OCI-LY7 (cell line): ENCODE measurements at regions of chr11 and their contacts with region 1.

Region 1: GRCh38 chr11:47152953-47153950 is 23.4 kb downstream of the ARFGAP2 start:
- DNase-seq: peak; percentile 94
- H3K4me3 ChIP-seq: peak overlapping the region; percentile 53
- H3K27ac ChIP-seq: peak overlapping the region; percentile 95
- H3K4me1 ChIP-seq: peaks cover 93% of the 10 kb centered on the region
- CTCF ChIP-seq: peak; percentile 100

Region 2: DNA sequence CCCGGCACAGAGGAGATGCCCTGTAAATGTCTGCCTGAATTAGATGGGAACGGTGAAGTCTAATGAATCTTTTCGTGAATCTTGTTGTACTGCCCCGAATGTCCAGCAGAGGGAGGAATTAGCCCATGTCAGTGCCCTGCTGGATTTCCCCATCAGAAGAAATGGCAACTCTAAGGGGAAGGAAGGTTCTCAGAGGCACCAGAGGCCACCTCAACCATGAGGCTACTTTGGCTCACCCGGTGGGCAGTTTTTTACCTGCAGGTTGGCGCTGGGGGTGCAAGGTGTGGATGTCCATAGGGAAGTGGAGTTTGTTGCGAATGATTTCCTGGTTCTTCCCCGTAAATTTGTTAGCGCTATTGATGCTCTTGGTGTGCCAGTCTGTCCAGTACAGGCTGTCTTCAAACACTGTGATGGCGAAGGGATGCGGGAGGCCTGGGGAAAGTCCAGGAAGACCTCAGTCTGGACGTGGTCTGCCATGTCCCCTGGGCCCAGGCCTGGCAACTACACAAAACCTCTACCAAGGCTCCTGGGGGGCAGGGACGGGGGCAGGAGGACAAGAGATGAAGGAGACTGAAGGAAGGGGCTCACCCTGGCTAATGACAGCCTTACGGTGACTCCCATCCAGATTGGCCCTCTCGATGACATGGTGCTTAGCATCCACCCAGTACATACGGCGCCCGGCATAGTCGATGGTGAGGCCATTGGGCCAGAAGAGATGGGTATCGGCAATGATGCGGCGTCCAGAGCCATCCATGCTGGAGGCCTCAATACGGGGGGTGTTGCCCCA is 263.4 kb before region 1 on chr11:
- CTCF ChIA-PET with region 1: interaction called, 6 read pairs
- POLR2A ChIA-PET with region 1: interaction called, 4 read pairs
- intact Hi-C with region 1: loop called (anchors 1 kb)
- DNase-seq: peak; percentile 85
- H3K4me3 ChIP-seq: no peak overlapping the region
- H3K27ac ChIP-seq: peak overlapping the region; percentile 4
- H3K4me1 ChIP-seq: peaks cover 4% of the 10 kb centered on the region
- CTCF ChIP-seq: peak; percentile 90

Region 3: DNA sequence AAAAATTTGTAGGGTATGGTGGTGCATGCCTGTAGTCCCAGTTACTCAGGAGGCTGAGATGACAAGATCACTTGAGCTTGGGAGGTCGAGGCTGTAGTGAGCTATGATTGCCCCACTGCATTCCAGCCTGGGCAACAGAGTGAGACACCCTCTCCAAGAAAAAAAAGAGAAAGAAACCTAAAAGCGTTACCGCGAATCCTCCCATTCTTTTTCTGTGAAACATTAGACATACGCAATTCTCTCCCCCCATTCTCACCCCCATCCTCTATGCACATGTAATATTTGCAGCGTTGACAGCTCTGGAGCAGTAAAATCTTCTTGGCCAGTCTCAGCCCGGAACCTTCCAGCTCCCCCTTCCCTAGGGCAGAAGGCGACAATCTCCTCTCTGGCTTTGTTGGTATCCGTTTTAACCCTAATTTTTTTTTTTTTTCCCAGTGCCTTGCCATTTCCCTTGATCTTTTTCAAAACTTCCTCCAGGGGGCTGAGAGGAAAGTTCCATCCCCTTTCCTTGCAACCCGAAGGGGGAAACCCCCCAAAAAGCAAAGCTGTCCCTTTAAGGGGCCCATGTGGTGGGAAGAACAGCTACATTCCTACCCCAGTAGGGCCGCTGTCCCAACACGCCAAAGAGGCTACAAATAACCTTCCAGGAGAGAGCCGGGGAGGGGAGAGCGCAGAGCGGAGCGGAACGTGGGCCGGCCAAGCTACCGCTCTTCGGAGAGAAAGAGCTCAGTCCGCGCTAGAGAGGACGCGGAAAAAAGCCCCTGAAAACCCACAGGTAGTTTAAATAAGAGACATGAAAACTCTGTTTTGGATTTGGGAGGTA is 236.8 kb before region 1 on chr11:
- CTCF ChIA-PET with region 1: no interaction called
- POLR2A ChIA-PET with region 1: interaction called, 10 read pairs
- intact Hi-C with region 1: loop called (anchors 1 kb)
- DNase-seq: no peak
- H3K4me3 ChIP-seq: peak overlapping the region; percentile 74
- H3K27ac ChIP-seq: no peak overlapping the region
- H3K4me1 ChIP-seq: peaks cover 66% of the 10 kb centered on the region
- CTCF ChIP-seq: peak; percentile 25; the same call in 1 of the 2 replicates

Region 4: GRCh38 chr11:47047972-47048371 is 105.3 kb before region 1 on chr11:
- CTCF ChIA-PET with region 1: no interaction called
- POLR2A ChIA-PET with region 1: interaction called, 5 read pairs
- intact Hi-C with region 1: loop called (anchors 5 kb)
- DNase-seq: peak; percentile 61
- H3K4me3 ChIP-seq: peak overlapping the region; percentile 1
- H3K27ac ChIP-seq: peak overlapping the region; percentile 52
- H3K4me1 ChIP-seq: peaks cover 26% of the 10 kb centered on the region
- CTCF ChIP-seq: no peak

Region 5: GRCh38 chr11:47104261-47104950 is 48.8 kb before region 1 on chr11:
- CTCF ChIA-PET with region 1: interaction called, 8 read pairs
- POLR2A ChIA-PET with region 1: interaction called, 48 read pairs
- intact Hi-C with region 1: no loop called
- DNase-seq: peak; percentile 51
- H3K4me3 ChIP-seq: peak overlapping the region; percentile 20
- H3K27ac ChIP-seq: peak overlapping the region; percentile 99
- H3K4me1 ChIP-seq: peaks cover 83% of the 10 kb centered on the region
- CTCF ChIP-seq: no peak

Region 6: DNA sequence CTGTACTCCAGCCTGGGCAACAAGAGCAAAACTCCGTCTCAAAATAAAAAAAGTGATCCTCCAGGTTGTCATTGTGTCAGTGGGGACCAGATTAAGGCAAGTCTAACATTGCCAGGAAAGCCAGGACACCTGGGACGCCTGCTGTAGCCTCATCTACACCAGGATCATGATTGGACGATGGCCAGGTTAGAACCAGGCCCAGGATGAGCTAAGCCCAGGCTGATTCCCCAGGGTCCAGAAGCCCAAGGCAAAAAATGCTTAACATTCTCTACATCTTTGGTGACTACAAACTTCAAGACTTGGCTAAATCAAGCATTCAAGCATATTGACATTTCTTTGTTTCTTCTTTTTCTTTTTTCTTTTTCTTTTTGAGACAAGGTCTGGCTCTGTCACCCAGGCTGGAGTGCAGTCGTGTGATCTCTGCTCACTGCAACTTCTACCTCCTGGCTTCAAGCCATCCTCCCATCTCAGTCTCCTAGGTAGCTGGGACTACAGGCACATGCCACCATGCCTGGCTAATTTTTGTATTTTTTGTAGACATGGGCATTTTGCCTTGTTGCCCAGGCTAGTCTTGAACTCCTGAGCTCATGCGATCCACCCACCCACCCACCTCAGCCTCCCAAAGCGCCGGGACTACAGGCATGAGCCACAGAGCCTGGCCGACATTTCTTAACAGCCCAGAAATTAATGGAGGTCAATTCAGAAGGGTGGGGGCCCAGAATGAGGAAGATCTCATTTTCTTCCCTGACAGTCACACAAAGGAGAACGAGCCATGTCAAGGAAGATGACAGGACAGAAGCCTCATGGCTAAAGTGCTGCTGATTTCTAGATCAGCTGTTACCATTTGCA is 814.5 kb after region 1 on chr11:
- CTCF ChIA-PET with region 1: no interaction called
- POLR2A ChIA-PET with region 1: no interaction called
- intact Hi-C with region 1: no loop called
- DNase-seq: no peak
- H3K4me3 ChIP-seq: no peak overlapping the region
- H3K27ac ChIP-seq: no peak overlapping the region
- H3K4me1 ChIP-seq: no peaks in the 10 kb centered on the region
- CTCF ChIP-seq: no peak

Region 7: GRCh38 chr11:47991266-47991830 is 838.1 kb after region 1 on chr11:
- CTCF ChIA-PET with region 1: no interaction called
- POLR2A ChIA-PET with region 1: no interaction called
- intact Hi-C with region 1: no loop called
- DNase-seq: peak; percentile 57
- H3K4me3 ChIP-seq: peak overlapping the region; percentile 59
- H3K27ac ChIP-seq: peak overlapping the region; percentile 41
- H3K4me1 ChIP-seq: peaks cover 68% of the 10 kb centered on the region
- CTCF ChIP-seq: no peak